A549 (cell line): ENCODE measurements at regions of chr6 and their contacts with region 1.

Region 1: GRCh38 chr6:52590152-52590931 is 13.5 kb upstream of the TRAM2 start:
- DNase-seq: no peak
- ATAC-seq: peak; percentile 71 to 73; a peak in 5 of 6 replicates
- H3K4me3 ChIP-seq: no peak overlapping the region
- H3K27ac ChIP-seq: peak overlapping the region in 1 of 2 experiments; percentile 60; a peak in 2 of 6 replicates
- H3K4me1 ChIP-seq: peaks cover 34% of the 10 kb centered on the region
- CTCF ChIP-seq: peak; percentile 27
- EP300 ChIP-seq: no peak
- POLR2A ChIP-seq: no peak
- RAD21 ChIP-seq: peak; percentile 44 to 56

Region 2: GRCh38 chr6:52407467-52407866 is 182.9 kb before region 1 on chr6:
- CTCF ChIA-PET with region 1: interaction called, 50 read pairs
- POLR2A ChIA-PET with region 1: no interaction called
- DNase-seq: peak; percentile 48 to 68
- ATAC-seq: peak in 1 of 2 experiments; percentile 84; a peak in 3 of 6 replicates
- H3K4me3 ChIP-seq: no peak overlapping the region
- H3K27ac ChIP-seq: no peak overlapping the region
- H3K4me1 ChIP-seq: no peaks in the 10 kb centered on the region
- CTCF ChIP-seq: peak; percentile 52
- EP300 ChIP-seq: no peak
- POLR2A ChIP-seq: no peak
- RAD21 ChIP-seq: peak; percentile 64 to 70